Motor neuron (in vitro differentiated cells): ENCODE measurements at regions of chr3 and their contacts with region 1.

Region 1: GRCh38 chr3:11385891-11386290 is 113.7 kb downstream of the ATG7 start:
- ATAC-seq: peak in 2 of 8 experiments; percentile 54
- H3K4me3 ChIP-seq: no peak overlapping the region
- H3K27ac ChIP-seq: no peak overlapping the region
- H3K4me1 ChIP-seq: peaks cover 4 to 18% of the 10 kb centered on the region in 2 donors

Region 2: GRCh38 chr3:11548721-11549131 is 162.8 kb after region 1 on chr3:
- in situ Hi-C with region 1: no loop called
- ATAC-seq: peak in 2 of 8 experiments; percentile 20 to 22
- H3K4me3 ChIP-seq: no peak overlapping the region
- H3K27ac ChIP-seq: no peak overlapping the region
- H3K4me1 ChIP-seq: peaks cover 0 to 14% of the 10 kb centered on the region in 2 donors

Region 3: DNA sequence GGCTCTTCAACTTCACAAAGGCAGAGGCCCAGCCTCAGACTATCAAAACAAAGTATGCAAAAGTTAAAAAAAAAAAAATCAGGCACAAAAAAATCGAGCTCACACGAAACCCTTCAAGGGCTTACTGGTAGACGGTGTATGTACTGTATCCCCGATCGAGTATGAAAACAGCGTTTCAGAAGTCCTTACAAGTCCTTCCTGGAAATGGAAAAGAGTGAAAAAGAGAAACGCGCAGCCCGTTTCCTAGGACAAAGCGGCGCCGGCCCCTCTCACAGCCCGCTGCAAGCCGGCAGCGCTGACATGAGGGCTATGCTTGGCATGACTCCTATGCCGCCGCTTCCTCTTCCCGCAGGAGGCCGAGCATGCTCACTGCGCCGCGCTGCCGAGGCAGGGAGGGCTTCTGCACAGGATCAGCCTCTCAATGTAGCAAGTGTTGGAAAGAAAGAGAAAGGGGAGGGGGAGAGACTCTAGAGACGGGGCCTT is 257.8 kb after region 1 on chr3 and contains the start of gene VGLL4:
- in situ Hi-C with region 1: loop called in 2 of 9 experiments (anchors 10 to 25 kb)
- ATAC-seq: peak; percentile 70 to 88 (median 82)
- H3K4me3 ChIP-seq: peak within 1 kb of the TSS; percentile 44 to 68 (median 48)
- H3K27ac ChIP-seq: peak within 1 kb of the TSS; percentile 83 to 87
- H3K4me1 ChIP-seq: peaks cover 22 to 29% of the 10 kb centered on the region in 2 donors
- total RNA-seq, gene VGLL4: 23.6 to 98.2 (median 42.4) TPM

Region 4: DNA sequence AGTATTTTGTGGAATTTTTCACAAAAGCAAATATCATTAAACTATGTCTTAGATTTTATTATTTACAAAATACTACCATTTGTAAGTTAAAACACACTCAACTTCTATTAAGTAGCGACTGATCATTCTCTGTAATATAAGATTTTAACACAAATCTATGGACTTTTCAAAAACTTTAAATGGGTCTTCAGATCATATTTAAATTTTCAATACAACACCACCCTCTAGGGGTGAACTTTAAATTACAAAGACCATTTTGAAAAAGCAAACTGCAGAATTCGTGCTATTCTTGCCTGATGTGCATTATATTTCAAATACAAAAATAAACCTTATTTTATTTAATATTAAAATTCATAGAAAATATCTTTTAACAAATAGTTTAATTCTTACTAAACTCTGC is 266.0 kb after region 1 on chr3:
- in situ Hi-C with region 1: loop called (anchors 10 to 25 kb)
- ATAC-seq: no peak
- H3K4me3 ChIP-seq: no peak overlapping the region
- H3K27ac ChIP-seq: no peak overlapping the region
- H3K4me1 ChIP-seq: no peaks in the 10 kb centered on the region

Region 5: DNA sequence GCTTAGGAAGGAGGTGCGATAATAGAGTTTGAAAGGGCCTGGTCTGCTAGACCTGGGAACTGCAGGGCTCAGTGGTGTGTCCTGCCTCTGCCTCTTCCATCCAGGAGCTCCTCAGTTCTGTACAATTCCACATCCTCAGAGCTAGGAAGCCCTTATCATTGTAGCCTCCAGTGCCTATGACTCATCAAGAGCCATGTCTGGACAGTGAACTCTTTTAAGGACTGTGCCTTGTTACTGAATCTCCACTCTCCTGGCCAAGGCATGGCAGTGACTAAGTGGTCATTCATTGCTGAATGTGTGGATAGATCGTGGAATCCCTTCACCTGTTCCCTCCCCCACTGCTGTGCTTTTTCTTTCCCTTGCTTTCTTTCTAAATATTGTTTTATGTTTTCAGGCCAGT is 769.9 kb after region 1 on chr3:
- in situ Hi-C with region 1: no loop called
- ATAC-seq: peak in 4 of 8 experiments; percentile 2 to 12 (median 8)
- H3K4me3 ChIP-seq: no peak overlapping the region
- H3K27ac ChIP-seq: no peak overlapping the region
- H3K4me1 ChIP-seq: peaks cover 16 to 17% of the 10 kb centered on the region in 2 donors